PC-9 (cell line): ENCODE measurements at regions of chr15 and their contacts with region 1.

Region 1: GRCh38 chr15:64387562-64388168 is at the start of gene TRIP4:
- DNase-seq: peak; percentile 89 to 94
- H3K4me3 ChIP-seq: peak within 1 kb of the TSS; percentile 95
- H3K27ac ChIP-seq: peak within 1 kb of the TSS; percentile 74
- H3K4me1 ChIP-seq: no peaks in the 10 kb centered on the region
- H3K27me3 ChIP-seq: no peaks in the 10 kb centered on the region
- CTCF ChIP-seq: no peak
- total RNA-seq, gene TRIP4: 15.5 and 18.1 TPM in 2 replicates

Region 2: GRCh38 chr15:64162870-64163658 is 224.6 kb before region 1 on chr15 and contains the start of gene PPIB:
- CTCF ChIA-PET with region 1: no interaction called
- POLR2A ChIA-PET with region 1: no interaction called
- intact Hi-C with region 1: loop called (anchors 1 kb)
- DNase-seq: peak; percentile 85 to 97
- H3K4me3 ChIP-seq: peak within 1 kb of the TSS; percentile 95
- H3K27ac ChIP-seq: peak within 1 kb of the TSS; percentile 51
- H3K4me1 ChIP-seq: no peaks in the 10 kb centered on the region; the same call in none of the 2 replicates
- H3K27me3 ChIP-seq: no peaks in the 10 kb centered on the region
- CTCF ChIP-seq: no peak; the same call in 1 of the 2 replicates
- total RNA-seq, gene PPIB: 308 and 345 TPM in 2 replicates

Region 3: DNA sequence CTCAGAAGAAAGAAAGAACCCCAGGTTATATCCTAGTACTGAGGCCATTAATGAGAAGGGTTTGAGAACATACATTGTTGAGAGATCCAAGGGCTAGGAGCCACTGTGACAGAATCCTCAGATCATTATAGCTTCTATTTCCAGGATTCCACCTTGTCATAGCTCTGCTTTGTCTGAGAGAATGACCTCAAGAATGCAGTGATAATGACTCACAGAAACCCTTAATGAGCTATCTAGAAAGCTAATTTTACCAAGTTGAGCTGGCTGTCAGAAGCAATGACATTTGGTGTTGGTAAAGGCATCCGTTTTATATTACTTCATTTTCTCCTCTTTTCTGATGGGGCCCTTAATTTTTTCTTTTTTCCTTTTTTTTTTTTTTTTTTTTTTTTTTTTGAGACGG is 10.9 kb after region 1 on chr15:
- CTCF ChIA-PET with region 1: interaction called, 11 read pairs
- POLR2A ChIA-PET with region 1: interaction called, 3 read pairs
- intact Hi-C with region 1: no loop called
- DNase-seq: no peak
- H3K4me3 ChIP-seq: no peak overlapping the region
- H3K27ac ChIP-seq: no peak overlapping the region
- H3K4me1 ChIP-seq: no peaks in the 10 kb centered on the region
- H3K27me3 ChIP-seq: no peaks in the 10 kb centered on the region
- CTCF ChIP-seq: no peak

Region 4: DNA sequence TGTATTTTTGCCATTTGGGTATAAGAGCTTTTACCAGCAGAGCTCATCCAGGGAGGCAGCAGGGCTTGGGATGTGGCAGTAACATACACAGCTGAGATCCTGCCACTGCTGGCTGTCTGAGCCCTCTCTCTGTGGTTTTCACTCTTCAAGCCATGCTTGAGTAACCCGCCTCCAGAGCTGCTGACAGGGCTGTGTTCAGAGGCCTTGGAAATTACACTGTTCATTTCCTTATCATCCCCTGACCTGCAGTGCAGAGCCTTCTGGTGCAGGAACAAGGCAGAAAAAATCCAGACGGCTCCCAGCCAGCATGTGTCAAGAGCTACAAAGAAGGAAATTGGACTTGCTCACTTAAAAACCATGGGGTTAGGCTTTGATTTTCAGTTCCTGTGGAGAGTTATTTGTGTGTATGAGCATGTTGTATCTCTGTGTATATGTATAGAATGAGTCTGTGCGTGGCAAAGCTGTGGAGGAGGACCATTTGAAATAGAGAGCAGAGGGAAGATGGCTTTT is 119.7 kb after region 1 on chr15:
- CTCF ChIA-PET with region 1: no interaction called
- POLR2A ChIA-PET with region 1: interaction called, 12 read pairs
- intact Hi-C with region 1: no loop called
- DNase-seq: peak; percentile 21 to 53
- H3K4me3 ChIP-seq: no peak overlapping the region
- H3K27ac ChIP-seq: no peak overlapping the region
- H3K4me1 ChIP-seq: no peaks in the 10 kb centered on the region
- H3K27me3 ChIP-seq: no peaks in the 10 kb centered on the region
- CTCF ChIP-seq: no peak